ENCODE measurements at regions of chr10 and their contacts with region 1.

Region 1: GRCh38 chr10:25080880-25081581 is 64.6 kb downstream of the THNSL1 start:
- H3K4me3 Mint-ChIP-seq: no peak overlapping the region
- H3K27ac Mint-ChIP-seq: no peak overlapping the region
- H3K4me1 Mint-ChIP-seq: peaks cover 12% of the 10 kb centered on the region
- H3K27me3 Mint-ChIP-seq: peaks cover 2% of the 10 kb centered on the region

Region 2: GRCh38 chr10:24617771-24618391 is 463.1 kb before region 1 on chr10:
- intact Hi-C with region 1: loop called (anchors 1 kb)
- H3K4me3 Mint-ChIP-seq: no peak overlapping the region
- H3K27ac Mint-ChIP-seq: no peak overlapping the region
- H3K4me1 Mint-ChIP-seq: no peaks in the 10 kb centered on the region
- H3K27me3 Mint-ChIP-seq: no peaks in the 10 kb centered on the region

Region 3: GRCh38 chr10:24642622-24643417 is 438.2 kb before region 1 on chr10:
- intact Hi-C with region 1: loop called (anchors 1 kb)
- H3K4me3 Mint-ChIP-seq: no peak overlapping the region
- H3K27ac Mint-ChIP-seq: no peak overlapping the region
- H3K4me1 Mint-ChIP-seq: peaks cover 15% of the 10 kb centered on the region
- H3K27me3 Mint-ChIP-seq: no peaks in the 10 kb centered on the region

Region 4: GRCh38 chr10:25016376-25017154 is 64.5 kb before region 1 on chr10 and contains the start of gene THNSL1:
- intact Hi-C with region 1: loop called (anchors 1 kb)
- H3K4me3 Mint-ChIP-seq: peak within 1 kb of the TSS; percentile 81
- H3K27ac Mint-ChIP-seq: peak within 1 kb of the TSS; percentile 97
- H3K4me1 Mint-ChIP-seq: peaks cover 21% of the 10 kb centered on the region
- H3K27me3 Mint-ChIP-seq: no peaks in the 10 kb centered on the region

Region 5: GRCh38 chr10:25198151-25198550 is 117.1 kb after region 1 on chr10:
- intact Hi-C with region 1: no loop called
- H3K4me3 Mint-ChIP-seq: no peak overlapping the region
- H3K27ac Mint-ChIP-seq: no peak overlapping the region
- H3K4me1 Mint-ChIP-seq: no peaks in the 10 kb centered on the region
- H3K27me3 Mint-ChIP-seq: no peaks in the 10 kb centered on the region